A673 (cell line): ENCODE measurements at regions of chr11 and their contacts with region 1.

Region 1: GRCh38 chr11:119067371-119068222 is at the start of gene VPS11:
- DNase-seq: peak; percentile 99
- H3K4me3 ChIP-seq: peak within 1 kb of the TSS; percentile 71
- H3K27ac ChIP-seq: peak within 1 kb of the TSS; percentile 73
- H3K4me1 ChIP-seq: peaks cover 5% of the 10 kb centered on the region
- H3K27me3 ChIP-seq: no peaks in the 10 kb centered on the region
- CTCF ChIP-seq: no peak
- total RNA-seq, gene VPS11: 26.7 and 32.4 TPM in 2 replicates

Region 2: GRCh38 chr11:118902336-118903203 is 165.0 kb before region 1 on chr11:
- CTCF ChIA-PET with region 1: no interaction called
- POLR2A ChIA-PET with region 1: no interaction called
- intact Hi-C with region 1: no loop called
- DNase-seq: no peak
- H3K4me3 ChIP-seq: no peak overlapping the region
- H3K27ac ChIP-seq: no peak overlapping the region
- H3K4me1 ChIP-seq: peaks cover 4% of the 10 kb centered on the region
- H3K27me3 ChIP-seq: no peaks in the 10 kb centered on the region
- CTCF ChIP-seq: no peak

Region 3: DNA sequence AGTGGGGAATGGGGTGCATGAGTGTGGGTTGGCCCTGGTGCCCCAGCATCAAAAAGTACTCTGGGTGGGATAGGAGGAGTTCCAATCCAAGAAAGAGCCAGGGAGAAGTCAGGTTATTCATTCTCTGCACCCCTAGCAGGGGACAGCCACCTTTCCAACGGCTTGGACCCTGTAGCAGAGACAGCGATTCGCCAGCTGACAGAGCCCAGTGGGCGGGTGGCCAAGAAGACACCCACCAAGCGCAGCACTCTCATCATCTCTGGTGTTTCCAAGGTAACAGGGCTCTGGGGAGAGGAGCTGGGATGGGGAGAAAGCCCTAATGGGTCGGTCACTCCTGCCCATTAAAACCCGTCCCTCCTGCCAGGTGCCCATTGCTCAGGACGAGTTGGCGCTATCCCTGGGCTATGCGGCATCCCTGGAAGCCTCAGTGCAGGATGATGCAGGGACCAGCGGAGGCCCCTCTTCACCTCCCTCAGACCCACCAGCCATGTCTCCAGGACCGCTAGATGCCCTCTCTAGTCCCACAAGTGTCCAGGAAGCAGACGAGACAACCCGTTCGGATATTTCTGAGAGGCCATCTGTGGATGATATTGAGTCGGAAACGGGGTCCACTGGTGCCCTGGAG is 46.2 kb after region 1 on chr11:
- CTCF ChIA-PET with region 1: no interaction called
- POLR2A ChIA-PET with region 1: interaction called, 13 read pairs
- intact Hi-C with region 1: no loop called
- DNase-seq: no peak
- H3K4me3 ChIP-seq: no peak overlapping the region
- H3K27ac ChIP-seq: no peak overlapping the region
- H3K4me1 ChIP-seq: peaks cover 5% of the 10 kb centered on the region
- H3K27me3 ChIP-seq: no peaks in the 10 kb centered on the region
- CTCF ChIP-seq: no peak